Sigmoid colon (tissue), 7 donors: ENCODE measurements at regions of chr2 and their contacts with region 1.

Region 1: GRCh38 chr2:11239666-11240462 is 84.6 kb downstream of the SLC66A3 start:
- DNase-seq: no peak
- H3K4me3 ChIP-seq: no peak overlapping the region
- H3K27ac ChIP-seq: no peak overlapping the region
- H3K4me1 ChIP-seq: peaks cover 0 to 21% (median 11%) of the 10 kb centered on the region in 4 donors
- H3K27me3 ChIP-seq: no peaks in the 10 kb centered on the region
- CTCF ChIP-seq: no peak
- EP300 ChIP-seq: no peak
- POLR2A ChIP-seq: no peak

Region 2: DNA sequence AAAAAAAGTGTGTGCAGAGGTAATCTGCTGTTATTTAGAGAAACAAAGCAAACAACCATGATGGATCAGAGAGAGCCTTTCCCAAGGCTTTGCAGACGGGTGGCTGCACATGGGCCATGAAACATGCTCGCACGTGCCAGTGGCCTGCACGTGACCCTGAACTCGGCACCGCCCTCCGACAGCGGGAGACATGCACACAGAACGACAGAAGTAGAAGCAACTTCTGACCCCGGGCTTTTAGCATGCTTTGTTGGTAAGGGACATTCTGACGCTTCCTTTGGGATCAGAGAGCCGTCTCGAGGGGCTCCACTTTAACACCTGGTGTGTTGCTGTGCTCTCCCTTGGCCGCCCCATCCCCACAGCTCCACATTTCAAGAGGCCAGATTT is 215.6 kb before region 1 on chr2:
- intact Hi-C with region 1: no loop called
- DNase-seq: no peak
- H3K4me3 ChIP-seq: no peak overlapping the region
- H3K27ac ChIP-seq: no peak overlapping the region
- H3K4me1 ChIP-seq: no peaks in the 10 kb centered on the region
- H3K27me3 ChIP-seq: no peaks in the 10 kb centered on the region
- CTCF ChIP-seq: no peak
- EP300 ChIP-seq: no peak
- POLR2A ChIP-seq: no peak

Region 3: GRCh38 chr2:11459816-11460215 is 220.0 kb after region 1 on chr2:
- intact Hi-C with region 1: loop called (anchors 5 kb)
- DNase-seq: no peak
- H3K4me3 ChIP-seq: no peak overlapping the region
- H3K27ac ChIP-seq: no peak overlapping the region
- H3K4me1 ChIP-seq: peaks cover 0 to 67% (median 45%) of the 10 kb centered on the region in 4 donors
- H3K27me3 ChIP-seq: no peaks in the 10 kb centered on the region
- CTCF ChIP-seq: no peak
- EP300 ChIP-seq: no peak
- POLR2A ChIP-seq: no peak